Natural killer cell (primary cell): ENCODE measurements at regions of chr20 and their contacts with region 1.

Region 1: GRCh38 chr20:34538671-34539123 is 19.8 kb upstream of the MAP1LC3A start:
- DNase-seq: peak; percentile 32 to 73
- ATAC-seq: peak; percentile 46 to 64 (median 64)
- H3K4me3 ChIP-seq: no peak overlapping the region
- H3K4me3 Mint-ChIP-seq: no peak overlapping the region
- H3K27ac ChIP-seq: no peak overlapping the region
- H3K27ac Mint-ChIP-seq: peak overlapping the region in 1 of 2 donors; percentile 65
- H3K4me1 ChIP-seq: peaks cover 16% of the 10 kb centered on the region
- H3K4me1 Mint-ChIP-seq: peaks cover 7 to 15% of the 10 kb centered on the region in 2 donors
- H3K27me3 ChIP-seq: no peaks in the 10 kb centered on the region
- H3K27me3 Mint-ChIP-seq: no peaks in the 10 kb centered on the region
- CTCF ChIP-seq: peak; percentile 70

Region 2: DNA sequence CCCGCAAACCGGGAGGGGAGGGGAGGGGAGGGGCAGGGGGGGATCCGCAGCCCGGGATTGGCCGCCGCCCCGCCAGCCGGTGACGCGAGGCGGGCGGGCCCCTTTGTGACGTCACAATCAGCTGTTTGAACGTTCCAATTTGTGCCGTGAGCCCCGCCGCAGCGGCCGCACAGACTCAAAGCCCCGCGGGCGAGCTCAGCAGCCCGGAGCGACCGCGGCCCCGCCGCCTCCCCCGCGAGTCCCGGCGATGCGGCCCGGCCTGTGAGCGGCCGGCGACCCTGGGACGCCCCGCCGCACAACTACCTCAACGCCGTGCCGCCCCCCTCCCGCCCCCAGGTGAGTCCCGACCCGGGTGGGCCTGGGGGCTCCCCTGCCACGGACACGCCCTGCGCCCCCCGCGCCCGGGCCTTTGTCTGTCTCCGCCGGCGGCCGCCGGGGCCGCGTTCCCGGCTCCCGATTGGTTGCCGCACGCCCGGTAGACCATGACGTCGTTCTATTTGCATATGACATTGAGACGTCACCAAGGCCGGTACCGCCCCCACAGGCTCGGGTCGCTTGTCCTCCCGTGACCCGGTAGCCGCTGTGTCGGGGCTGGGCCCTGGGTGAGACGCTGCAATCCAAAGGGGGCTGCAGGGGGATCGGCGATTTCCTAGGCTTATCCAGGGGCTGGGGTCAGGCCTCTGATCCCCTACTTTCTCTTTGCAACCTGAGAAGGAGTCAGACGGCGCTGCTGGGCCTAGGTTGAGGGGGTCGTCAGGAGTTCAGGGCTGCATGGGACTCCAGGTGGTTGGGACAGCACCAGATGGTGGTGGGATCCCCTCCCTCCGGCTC is 165.7 kb after region 1 on chr20 and contains the start of gene TP53INP2:
- intact Hi-C with region 1: loop called (anchors 10 kb)
- DNase-seq: peak; percentile 88 to 95
- ATAC-seq: peak; percentile 65 to 82 (median 71)
- H3K4me3 ChIP-seq: peak within 1 kb of the TSS; percentile 56
- H3K4me3 Mint-ChIP-seq: peak within 1 kb of the TSS; percentile 94
- H3K27ac ChIP-seq: peak within 1 kb of the TSS; percentile 56
- H3K27ac Mint-ChIP-seq: peak within 1 kb of the TSS; percentile 94 to 98
- H3K4me1 ChIP-seq: peaks cover 27% of the 10 kb centered on the region
- H3K4me1 Mint-ChIP-seq: peaks cover 16 to 27% of the 10 kb centered on the region in 2 donors
- H3K27me3 ChIP-seq: no peaks in the 10 kb centered on the region
- H3K27me3 Mint-ChIP-seq: peaks cover 0 to 12% of the 10 kb centered on the region in 2 donors
- CTCF ChIP-seq: no peak
- total RNA-seq, gene TP53INP2: 30.7 to 56.3 (median 35.9) TPM

Region 3: GRCh38 chr20:34768096-34768495 is 229.4 kb after region 1 on chr20:
- intact Hi-C with region 1: loop called (anchors 1 kb)
- DNase-seq: no peak
- ATAC-seq: no peak
- H3K4me3 ChIP-seq: no peak overlapping the region
- H3K4me3 Mint-ChIP-seq: no peak overlapping the region
- H3K27ac ChIP-seq: no peak overlapping the region
- H3K27ac Mint-ChIP-seq: no peak overlapping the region
- H3K4me1 ChIP-seq: no peaks in the 10 kb centered on the region
- H3K4me1 Mint-ChIP-seq: no peaks in the 10 kb centered on the region
- H3K27me3 ChIP-seq: no peaks in the 10 kb centered on the region
- H3K27me3 Mint-ChIP-seq: no peaks in the 10 kb centered on the region
- CTCF ChIP-seq: no peak